Activated CD8-positive, alpha-beta T cell treated with anti-CD3 and anti-CD28 coated beads for 36 hours (primary cell): ENCODE measurements at regions of chr6 and their contacts with region 1.

Region 1: DNA sequence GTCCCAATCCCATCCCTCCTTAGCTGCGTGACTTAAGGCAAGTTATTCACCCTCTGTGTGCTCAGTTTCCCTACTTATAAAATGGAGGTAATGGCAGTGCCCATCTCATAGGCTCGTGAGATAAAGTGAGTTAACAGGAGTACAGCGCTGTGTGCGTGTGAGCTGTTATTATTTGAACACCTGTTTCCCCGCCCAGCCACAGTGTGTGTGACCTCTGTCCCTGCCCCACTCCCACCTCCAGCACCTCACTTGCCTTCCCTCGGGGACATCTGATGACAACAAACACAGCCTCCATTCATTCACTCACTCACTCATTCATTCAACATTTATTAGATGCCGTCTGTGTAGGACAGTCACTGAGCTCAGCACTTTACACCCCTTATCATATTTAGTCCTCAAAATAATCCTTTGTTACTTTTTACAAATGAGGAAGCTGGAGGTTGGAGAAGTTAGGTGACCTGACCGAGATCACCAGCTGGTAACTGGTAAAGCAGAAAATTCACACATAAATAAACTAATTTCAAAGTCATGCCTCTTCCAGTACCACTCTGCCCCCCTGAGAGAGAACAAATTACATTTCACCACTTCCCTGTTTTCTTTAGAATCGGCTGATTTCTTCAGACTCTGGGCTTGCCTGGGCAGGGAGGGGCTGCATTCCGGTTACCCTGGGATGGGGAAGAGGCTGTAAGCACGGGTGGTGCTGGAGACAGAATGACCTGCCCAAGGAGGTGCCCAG is 58.6 kb downstream of the CPNE5 start:
- DNase-seq: no peak
- ATAC-seq: no peak
- H3K4me3 Mint-ChIP-seq: no peak overlapping the region
- H3K27ac Mint-ChIP-seq: no peak overlapping the region
- H3K4me1 Mint-ChIP-seq: peaks cover 2% of the 10 kb centered on the region
- H3K27me3 Mint-ChIP-seq: peaks cover 1% of the 10 kb centered on the region
- CTCF ChIP-seq: no peak

Region 2: DNA sequence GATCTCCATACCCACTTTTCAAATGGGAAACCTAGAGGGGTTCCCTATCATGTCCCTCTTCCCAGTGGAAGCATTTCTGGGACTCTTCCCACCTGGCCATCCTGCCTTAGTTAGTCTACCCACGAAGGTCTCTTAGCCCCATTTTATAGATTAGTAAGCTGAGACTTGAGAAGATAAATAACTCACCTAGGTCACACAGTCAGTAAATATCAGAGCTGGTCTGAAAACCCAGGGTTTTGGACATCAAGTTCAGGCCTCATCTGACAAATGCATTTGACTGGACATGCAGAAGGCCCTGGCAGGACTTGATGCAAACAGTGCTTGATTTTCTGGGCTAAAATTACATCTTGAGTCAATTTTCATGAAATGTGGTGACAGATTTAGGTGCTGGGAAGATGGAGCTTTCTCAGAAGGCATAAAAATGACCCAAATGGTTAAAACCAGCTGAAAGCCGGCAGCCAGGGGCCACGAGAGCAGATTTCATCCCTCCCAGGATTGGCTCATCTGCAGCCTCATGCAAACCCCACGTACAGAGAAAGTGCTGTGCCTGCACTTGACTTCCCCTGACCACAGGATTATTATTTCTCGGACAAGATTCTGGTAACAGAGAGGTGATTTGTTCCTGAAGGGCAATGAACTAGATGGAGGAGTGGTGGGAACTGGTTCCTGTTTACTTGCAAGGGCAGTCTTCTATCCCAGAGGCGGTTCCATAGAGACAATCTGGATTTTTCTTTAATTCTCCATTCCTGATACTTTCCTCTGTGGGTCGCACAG is 35.5 kb after region 1 on chr6:
- CTCF ChIA-PET with region 1: interaction called, 12 read pairs
- POLR2A ChIA-PET with region 1: no interaction called
- intact Hi-C with region 1: no loop called
- DNase-seq: no peak
- ATAC-seq: no peak
- H3K4me3 Mint-ChIP-seq: no peak overlapping the region
- H3K27ac Mint-ChIP-seq: no peak overlapping the region
- H3K4me1 Mint-ChIP-seq: no peaks in the 10 kb centered on the region
- H3K27me3 Mint-ChIP-seq: no peaks in the 10 kb centered on the region
- CTCF ChIP-seq: no peak

Region 3: DNA sequence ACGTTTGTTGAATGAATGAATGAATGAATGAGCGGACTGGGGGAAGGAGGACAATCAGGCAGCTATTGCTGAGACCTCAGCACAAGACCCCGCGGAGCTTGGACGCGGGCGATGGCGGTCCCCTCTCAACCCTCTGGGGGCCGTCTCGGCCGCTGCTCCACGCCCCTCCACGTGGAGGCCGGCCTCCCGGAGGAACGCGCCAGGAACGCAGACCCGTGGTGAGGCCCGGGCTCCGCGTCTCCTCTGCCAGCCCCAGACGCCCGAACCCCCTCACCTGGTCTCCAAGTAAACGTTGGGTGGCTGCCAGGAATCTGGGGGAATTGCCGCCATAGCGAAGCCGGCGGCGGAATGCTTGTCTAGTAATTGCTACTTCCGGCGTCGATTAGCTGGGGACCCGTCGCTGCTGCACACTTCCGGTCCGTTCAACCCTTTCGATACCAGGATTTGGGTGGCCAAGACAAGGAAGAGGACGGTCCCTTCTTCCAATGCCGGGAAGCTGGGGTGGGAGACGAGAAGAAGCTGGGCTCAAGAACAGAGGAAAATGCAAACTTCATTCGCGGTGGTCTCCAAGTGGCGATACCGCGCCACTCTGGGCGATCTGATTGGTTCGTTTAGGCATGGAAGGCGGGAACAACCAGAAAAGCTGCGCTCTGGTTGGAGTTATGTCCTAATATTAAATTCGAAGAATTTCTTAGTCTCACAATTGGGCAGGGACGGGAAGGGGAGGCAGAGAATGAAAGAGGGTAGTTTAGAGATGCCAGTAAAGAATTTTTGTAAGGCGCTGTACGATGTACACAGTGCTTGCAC is 94.0 kb after region 1 on chr6 and contains the start of gene PPIL1:
- CTCF ChIA-PET with region 1: interaction called, 13 read pairs
- POLR2A ChIA-PET with region 1: no interaction called
- intact Hi-C with region 1: no loop called
- DNase-seq: peak; percentile 88
- ATAC-seq: peak; percentile 91
- H3K4me3 Mint-ChIP-seq: peak within 1 kb of the TSS; percentile 99
- H3K27ac Mint-ChIP-seq: peak within 1 kb of the TSS; percentile 100
- H3K4me1 Mint-ChIP-seq: peaks cover 42% of the 10 kb centered on the region
- H3K27me3 Mint-ChIP-seq: peaks cover 5% of the 10 kb centered on the region
- CTCF ChIP-seq: no peak
- total RNA-seq, gene PPIL1: 34.5 to 35.6 TPM